CD8-positive, alpha-beta memory T cell (primary cell): ENCODE measurements at regions of chr1 and their contacts with region 1.

Region 1: DNA sequence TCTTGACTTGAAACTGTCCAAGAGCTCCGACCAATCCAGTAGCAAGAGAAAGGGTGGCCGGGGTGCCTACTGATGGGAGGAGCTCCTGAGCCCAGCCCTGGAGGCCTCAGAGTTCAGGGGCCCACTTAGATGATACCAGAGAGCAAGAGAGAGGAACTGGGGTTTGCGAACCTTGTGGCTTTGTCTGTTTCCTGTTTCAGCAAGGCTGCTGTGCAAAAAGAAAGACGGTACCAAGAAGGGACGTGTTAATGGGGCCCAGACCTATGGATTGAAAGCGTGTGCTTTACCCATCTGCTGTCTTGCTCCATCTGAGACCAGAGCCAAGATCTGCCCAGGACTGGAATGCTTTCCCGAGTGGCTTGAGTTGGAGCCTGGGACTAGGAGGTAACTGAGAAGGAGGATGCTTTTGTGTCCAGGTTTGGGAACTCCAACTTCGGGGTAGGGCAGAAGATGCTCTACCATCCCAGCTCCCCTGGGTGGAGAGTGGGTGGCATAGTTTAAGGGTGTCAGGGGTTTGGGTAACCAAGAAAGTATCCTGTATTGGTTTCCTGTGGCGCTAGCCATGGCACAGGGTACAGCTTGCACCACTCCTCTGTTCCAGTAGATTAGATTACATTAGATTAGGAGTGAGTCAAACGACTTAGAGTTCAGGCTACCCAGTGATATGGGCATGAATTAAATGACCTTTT is at the start of gene TRAF3IP3:
- DNase-seq: peak; percentile 52 to 84 (median 80)
- H3K4me3 ChIP-seq: peak within 1 kb of the TSS; percentile 89
- H3K4me3 Mint-ChIP-seq: peak within 1 kb of the TSS; percentile 90 to 100 (median 98)
- H3K27ac ChIP-seq: peak within 1 kb of the TSS; percentile 57
- H3K27ac Mint-ChIP-seq: peak within 1 kb of the TSS; percentile 84 to 98 (median 96)
- H3K4me1 ChIP-seq: peaks cover 78% of the 10 kb centered on the region
- H3K4me1 Mint-ChIP-seq: peaks cover 67 to 81% (median 73%) of the 10 kb centered on the region in 3 donors
- H3K27me3 ChIP-seq: no peaks in the 10 kb centered on the region
- H3K27me3 Mint-ChIP-seq: no peaks in the 10 kb centered on the region
- total RNA-seq, gene TRAF3IP3: 193 to 209 TPM

Region 2: GRCh38 chr1:209627732-209628196 is 128.3 kb before region 1 on chr1:
- CTCF ChIA-PET with region 1: no interaction called
- POLR2A ChIA-PET with region 1: no interaction called
- DNase-seq: peak; percentile 49 to 76 (median 60)
- H3K4me3 ChIP-seq: no peak overlapping the region
- H3K4me3 Mint-ChIP-seq: no peak overlapping the region
- H3K27ac ChIP-seq: no peak overlapping the region
- H3K27ac Mint-ChIP-seq: no peak overlapping the region
- H3K4me1 ChIP-seq: peaks cover 7% of the 10 kb centered on the region
- H3K4me1 Mint-ChIP-seq: peaks cover 0 to 3% (median 3%) of the 10 kb centered on the region in 3 donors
- H3K27me3 ChIP-seq: no peaks in the 10 kb centered on the region
- H3K27me3 Mint-ChIP-seq: peaks cover 0 to 3% of the 10 kb centered on the region in 2 donors

Region 3: GRCh38 chr1:209710093-209710492 is 46.0 kb before region 1 on chr1:
- CTCF ChIA-PET with region 1: no interaction called
- POLR2A ChIA-PET with region 1: no interaction called
- DNase-seq: no peak
- H3K4me3 ChIP-seq: no peak overlapping the region
- H3K4me3 Mint-ChIP-seq: peak overlapping the region in 3 of 7 donors; percentile 4 to 49 (median 4)
- H3K27ac ChIP-seq: no peak overlapping the region
- H3K27ac Mint-ChIP-seq: peak overlapping the region in 1 of 8 donors; percentile 14
- H3K4me1 ChIP-seq: no peaks in the 10 kb centered on the region
- H3K4me1 Mint-ChIP-seq: peaks cover 3 to 15% (median 13%) of the 10 kb centered on the region in 3 donors
- H3K27me3 ChIP-seq: no peaks in the 10 kb centered on the region
- H3K27me3 Mint-ChIP-seq: peaks cover 3 to 10% of the 10 kb centered on the region in 2 donors

Region 4: GRCh38 chr1:209774592-209774991 is 18.5 kb after region 1 on chr1:
- CTCF ChIA-PET with region 1: interaction called, 255 read pairs
- POLR2A ChIA-PET with region 1: interaction called, 50 read pairs
- DNase-seq: no peak
- H3K4me3 ChIP-seq: no peak overlapping the region
- H3K4me3 Mint-ChIP-seq: peak overlapping the region in 4 of 7 donors; percentile 7 to 44 (median 28)
- H3K27ac ChIP-seq: no peak overlapping the region
- H3K27ac Mint-ChIP-seq: peak overlapping the region in 7 of 8 donors; percentile 40 to 95 (median 88)
- H3K4me1 ChIP-seq: peaks cover 56% of the 10 kb centered on the region
- H3K4me1 Mint-ChIP-seq: peaks cover 26 to 33% (median 27%) of the 10 kb centered on the region in 3 donors
- H3K27me3 ChIP-seq: no peaks in the 10 kb centered on the region
- H3K27me3 Mint-ChIP-seq: no peaks in the 10 kb centered on the region

Region 5: DNA sequence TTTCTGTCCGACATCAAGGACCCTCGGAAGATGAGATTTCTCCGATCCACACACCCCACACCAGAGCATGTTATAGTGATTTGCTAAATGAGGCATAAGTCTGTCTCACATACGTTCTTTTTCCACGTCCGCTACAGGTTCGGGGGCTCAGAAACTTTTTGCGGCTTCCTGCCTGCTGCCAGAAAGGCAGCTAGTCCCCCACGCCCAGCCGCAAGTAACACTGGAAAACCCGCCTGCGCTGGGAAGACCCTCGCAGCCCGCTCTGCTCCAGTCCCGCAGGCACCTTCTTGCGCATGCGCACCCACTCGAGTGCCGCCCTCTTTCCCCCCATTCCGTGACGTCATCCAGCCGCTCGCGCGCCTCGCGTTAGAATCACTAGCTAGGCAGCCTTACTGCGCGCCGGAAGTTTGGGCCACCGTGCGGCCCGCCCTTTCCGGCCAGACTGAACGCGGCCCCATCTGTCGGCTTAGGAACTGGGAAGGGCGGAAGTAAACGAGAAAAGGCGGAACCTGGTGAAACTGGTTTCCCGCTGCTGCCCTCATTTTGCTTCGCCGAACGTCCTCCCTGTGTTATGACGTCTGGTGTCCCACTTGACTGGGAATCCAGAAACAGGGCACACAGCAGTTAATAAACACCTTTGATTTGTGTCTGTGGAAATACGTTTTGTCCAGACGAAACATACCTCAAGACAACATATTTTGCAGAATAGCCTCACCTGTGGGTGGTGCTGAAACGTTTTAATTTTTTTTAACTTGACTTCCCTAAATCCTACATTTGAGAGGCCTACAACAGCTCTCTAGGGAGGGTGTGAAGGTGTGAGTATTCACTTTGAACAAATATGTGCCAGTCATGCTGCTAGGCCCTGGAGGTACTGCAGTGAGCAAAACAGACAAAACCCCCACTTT is 28.4 kb after region 1 on chr1 and contains the start of gene C1orf74:
- CTCF ChIA-PET with region 1: interaction called, 4 read pairs
- POLR2A ChIA-PET with region 1: interaction called, 20 read pairs
- DNase-seq: peak; percentile 98 to 100 (median 99)
- H3K4me3 ChIP-seq: peak within 1 kb of the TSS; percentile 89
- H3K4me3 Mint-ChIP-seq: peak within 1 kb of the TSS; percentile 85 to 99 (median 93)
- H3K27ac ChIP-seq: peak within 1 kb of the TSS; percentile 90
- H3K27ac Mint-ChIP-seq: peak within 1 kb of the TSS; percentile 90 to 99 (median 98)
- H3K4me1 ChIP-seq: peaks cover 20% of the 10 kb centered on the region
- H3K4me1 Mint-ChIP-seq: peaks cover 17 to 45% (median 41%) of the 10 kb centered on the region in 3 donors
- H3K27me3 ChIP-seq: no peaks in the 10 kb centered on the region
- H3K27me3 Mint-ChIP-seq: peaks cover 0 to 5% of the 10 kb centered on the region in 2 donors
- total RNA-seq, gene C1orf74: 2.2 TPM

Region 6: DNA sequence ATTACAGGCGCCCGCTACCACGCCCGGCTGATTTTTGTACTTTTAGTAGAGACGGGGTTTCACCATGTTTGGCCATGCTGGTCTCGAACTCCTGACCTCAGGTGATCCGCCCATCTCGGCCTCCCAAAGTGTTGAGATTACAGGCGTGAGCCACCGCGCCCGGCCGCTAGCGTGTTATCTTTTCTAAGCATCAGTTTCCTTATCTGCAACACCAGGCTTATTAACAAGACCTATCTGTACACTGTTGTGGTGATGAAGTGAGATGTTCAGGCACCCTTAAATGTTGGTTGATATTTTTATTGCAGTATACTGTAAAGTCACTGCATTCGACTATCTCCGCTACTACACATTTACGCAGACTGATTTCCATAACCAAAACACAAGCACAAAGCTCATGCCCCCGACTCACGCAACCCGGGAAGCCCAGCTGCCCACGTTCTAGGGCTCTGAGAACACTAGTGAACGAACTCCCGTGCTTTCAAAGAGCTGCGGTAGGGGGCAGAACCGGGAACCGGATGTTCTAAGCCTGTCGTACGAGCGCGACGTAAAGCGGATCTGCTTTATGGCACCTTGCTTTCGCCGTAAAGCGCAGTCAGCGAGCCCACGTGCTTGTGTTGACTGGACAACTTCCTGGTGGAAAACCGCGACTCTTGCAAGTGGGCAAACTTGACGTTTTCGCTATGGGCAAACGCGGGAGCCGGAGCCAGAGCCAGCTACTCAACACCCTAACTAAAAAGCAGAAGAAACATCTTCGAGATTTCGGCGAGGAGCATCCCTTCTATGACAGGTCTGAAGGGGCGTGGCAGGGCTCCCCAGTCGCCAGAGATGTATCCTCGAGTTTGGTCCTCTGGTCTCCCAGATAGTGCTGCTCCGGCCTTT is 71.6 kb after region 1 on chr1 and contains the start of gene UTP25:
- CTCF ChIA-PET with region 1: interaction called, 10 read pairs
- POLR2A ChIA-PET with region 1: no interaction called
- DNase-seq: peak; percentile 83 to 94 (median 91)
- H3K4me3 ChIP-seq: peak within 1 kb of the TSS; percentile 99
- H3K4me3 Mint-ChIP-seq: peak within 1 kb of the TSS; percentile 90 to 97 (median 96)
- H3K27ac ChIP-seq: peak within 1 kb of the TSS; percentile 90
- H3K27ac Mint-ChIP-seq: peak within 1 kb of the TSS; percentile 74 to 98 (median 90)
- H3K4me1 ChIP-seq: peaks cover 29% of the 10 kb centered on the region
- H3K4me1 Mint-ChIP-seq: peaks cover 46 to 50% (median 47%) of the 10 kb centered on the region in 3 donors
- H3K27me3 ChIP-seq: no peaks in the 10 kb centered on the region
- H3K27me3 Mint-ChIP-seq: peaks cover 7 to 11% of the 10 kb centered on the region in 2 donors
- total RNA-seq, gene UTP25: 14.9 to 15.2 TPM